ENCODE measurements at regions of chr11 and their contacts with region 1.

Region 1: GRCh38 chr11:122101625-122102291 is 14.3 kb downstream of the BLID start:
- DNase-seq: peak; percentile 85
- H3K4me3 Mint-ChIP-seq: no peak overlapping the region
- H3K27ac Mint-ChIP-seq: no peak overlapping the region
- H3K4me1 Mint-ChIP-seq: peaks cover 27% of the 10 kb centered on the region
- H3K27me3 Mint-ChIP-seq: no peaks in the 10 kb centered on the region
- CTCF ChIP-seq: peak; percentile 41

Region 2: DNA sequence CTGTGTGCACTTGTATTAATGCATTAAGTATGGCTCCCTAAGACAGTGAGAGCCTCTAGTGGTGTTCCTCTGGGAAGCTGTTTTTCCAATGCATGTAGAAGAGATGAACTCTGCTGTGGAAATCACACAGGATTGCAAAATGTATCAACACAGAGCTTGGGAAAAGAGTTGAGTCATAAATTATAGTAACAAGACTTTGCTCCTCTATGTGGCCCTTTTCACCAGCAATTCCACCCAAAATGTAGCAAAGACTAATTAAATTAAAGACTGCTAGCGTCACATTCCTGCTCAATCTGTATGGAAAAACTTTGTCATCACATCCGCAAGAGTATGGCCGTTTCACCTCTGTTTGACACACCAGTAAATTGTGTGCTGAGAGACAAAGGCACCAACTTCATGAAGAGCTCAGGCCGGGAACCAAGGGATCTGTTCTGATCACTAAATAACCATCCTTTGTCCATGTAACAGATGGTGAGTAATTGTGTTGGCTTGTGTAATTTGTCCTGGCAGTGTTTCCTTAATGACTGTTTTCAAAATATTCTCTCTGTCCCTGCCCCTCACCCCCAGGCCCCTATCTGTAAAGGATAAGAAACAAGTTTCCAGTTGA is 439.8 kb before region 1 on chr11:
- CTCF ChIA-PET with region 1: interaction called, 82 read pairs
- POLR2A ChIA-PET with region 1: interaction called, 12 read pairs
- intact Hi-C with region 1: no loop called
- DNase-seq: peak; percentile 63
- H3K4me3 Mint-ChIP-seq: no peak overlapping the region
- H3K27ac Mint-ChIP-seq: peak overlapping the region; percentile 86
- H3K4me1 Mint-ChIP-seq: peaks cover 12% of the 10 kb centered on the region
- H3K27me3 Mint-ChIP-seq: no peaks in the 10 kb centered on the region
- CTCF ChIP-seq: no peak

Region 3: GRCh38 chr11:122045181-122045586 is 56.6 kb before region 1 on chr11:
- CTCF ChIA-PET with region 1: no interaction called
- POLR2A ChIA-PET with region 1: no interaction called
- intact Hi-C with region 1: loop called (anchors 1 kb)
- DNase-seq: peak; percentile 63
- H3K4me3 Mint-ChIP-seq: no peak overlapping the region
- H3K27ac Mint-ChIP-seq: peak overlapping the region; percentile 59
- H3K4me1 Mint-ChIP-seq: peaks cover 7% of the 10 kb centered on the region
- H3K27me3 Mint-ChIP-seq: no peaks in the 10 kb centered on the region
- CTCF ChIP-seq: no peak

Region 4: DNA sequence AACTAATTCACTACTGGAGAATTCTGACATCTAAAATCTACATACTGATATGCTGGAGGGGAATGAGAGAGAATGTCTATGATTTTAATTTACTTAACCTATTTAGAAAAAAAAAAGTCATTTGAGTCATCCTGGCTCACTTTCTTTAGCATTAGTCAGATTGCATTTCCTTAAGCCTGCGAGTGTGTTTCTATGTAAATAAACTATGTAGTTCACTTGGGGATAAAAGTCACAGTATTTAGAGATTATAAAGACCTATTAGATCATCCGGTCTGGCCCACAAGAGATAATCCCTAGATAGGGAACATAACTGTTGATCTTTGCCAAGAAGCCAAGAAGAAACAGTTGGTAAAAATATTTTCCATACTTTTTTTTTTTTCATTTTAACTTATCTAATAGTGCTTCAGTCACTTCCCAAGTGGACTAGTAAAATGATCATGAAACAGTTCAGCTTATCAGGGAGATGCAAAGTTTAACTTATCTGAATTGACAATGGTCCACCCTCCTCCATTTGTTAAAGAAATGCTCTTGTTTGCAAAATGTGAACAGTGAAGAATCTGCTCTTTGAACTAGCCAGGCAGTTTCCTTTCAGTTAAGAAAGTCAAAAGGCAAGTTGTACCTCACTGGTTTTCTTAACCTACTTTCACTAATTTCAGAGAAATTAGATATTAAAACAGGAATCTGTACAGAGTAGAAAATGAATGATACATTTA is 35.5 kb after region 1 on chr11:
- CTCF ChIA-PET with region 1: interaction called, 8 read pairs
- POLR2A ChIA-PET with region 1: interaction called, 19 read pairs
- intact Hi-C with region 1: no loop called
- DNase-seq: peak; percentile 70
- H3K4me3 Mint-ChIP-seq: no peak overlapping the region
- H3K27ac Mint-ChIP-seq: peak overlapping the region; percentile 89
- H3K4me1 Mint-ChIP-seq: peaks cover 46% of the 10 kb centered on the region
- H3K27me3 Mint-ChIP-seq: no peaks in the 10 kb centered on the region
- CTCF ChIP-seq: no peak

Region 5: DNA sequence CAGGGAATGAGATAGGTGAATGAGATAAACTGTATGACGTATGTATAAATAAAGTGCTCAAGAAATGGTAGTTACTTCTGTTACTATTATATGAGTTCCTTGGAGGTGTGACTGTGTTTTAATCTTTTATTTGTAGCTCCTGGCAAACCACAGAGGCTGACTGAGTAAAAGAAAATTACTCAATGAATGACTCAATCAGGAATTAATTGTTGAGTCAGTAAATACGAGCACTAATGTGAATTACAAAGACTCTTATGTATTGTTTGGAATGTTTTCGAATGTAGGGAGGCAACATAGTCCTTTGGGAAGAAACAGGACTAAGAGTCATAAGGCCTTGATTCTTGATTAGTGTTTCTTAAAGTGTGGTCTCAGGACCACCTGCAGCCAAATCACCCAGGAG is 65.3 kb after region 1 on chr11:
- CTCF ChIA-PET with region 1: interaction called, 10 read pairs
- POLR2A ChIA-PET with region 1: interaction called, 290 read pairs
- intact Hi-C with region 1: no loop called
- DNase-seq: peak; percentile 84
- H3K4me3 Mint-ChIP-seq: peak overlapping the region; percentile 39
- H3K27ac Mint-ChIP-seq: peak overlapping the region; percentile 96
- H3K4me1 Mint-ChIP-seq: peaks cover 68% of the 10 kb centered on the region
- H3K27me3 Mint-ChIP-seq: no peaks in the 10 kb centered on the region
- CTCF ChIP-seq: no peak

Region 6: DNA sequence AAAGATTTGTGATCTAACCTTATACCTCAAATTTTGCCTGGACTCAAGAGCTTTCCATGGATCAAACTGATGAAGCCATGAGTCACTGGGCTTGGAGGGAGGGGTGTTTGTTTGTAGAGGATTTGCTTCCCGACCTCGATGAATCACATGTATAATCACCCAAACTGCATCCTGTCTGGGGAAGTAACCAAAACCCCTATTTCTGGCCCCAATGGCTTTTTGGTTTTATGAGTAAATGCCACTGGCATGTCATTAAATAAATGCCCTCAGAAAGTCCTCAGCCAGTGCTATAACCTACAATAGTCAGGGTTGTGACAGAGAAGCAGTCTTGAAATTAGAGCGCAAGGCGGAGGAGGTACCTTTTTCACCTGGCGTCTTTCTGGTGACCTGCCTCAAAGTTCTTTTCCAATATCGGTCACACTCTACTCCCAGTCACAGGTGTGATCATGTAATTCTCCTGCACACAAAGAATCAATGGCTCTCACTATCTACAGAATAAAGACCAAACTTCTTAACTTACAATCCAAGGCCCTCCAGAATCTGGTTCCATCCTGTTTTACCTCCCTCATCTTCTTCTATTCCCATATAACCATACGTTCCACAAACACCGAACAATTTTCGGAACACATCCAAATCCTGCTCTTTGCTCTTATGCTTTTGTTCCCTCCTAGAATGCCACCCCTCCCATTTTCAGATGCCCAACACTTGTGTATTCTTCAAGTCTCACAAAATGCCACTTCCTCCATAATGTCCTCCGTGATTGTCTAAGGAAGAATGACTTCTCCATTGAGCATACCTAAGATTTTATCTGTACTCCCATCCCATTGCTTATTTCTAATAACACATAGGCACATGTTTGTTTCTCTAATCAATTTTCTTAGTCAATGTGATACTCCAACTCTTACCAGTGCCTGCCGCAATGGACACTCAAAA is 95.6 kb after region 1 on chr11:
- CTCF ChIA-PET with region 1: interaction called, 54 read pairs
- POLR2A ChIA-PET with region 1: interaction called, 103 read pairs
- intact Hi-C with region 1: no loop called
- DNase-seq: peak; percentile 98
- H3K4me3 Mint-ChIP-seq: peak overlapping the region; percentile 12
- H3K27ac Mint-ChIP-seq: peak overlapping the region; percentile 49
- H3K4me1 Mint-ChIP-seq: peaks cover 46% of the 10 kb centered on the region
- H3K27me3 Mint-ChIP-seq: no peaks in the 10 kb centered on the region
- CTCF ChIP-seq: no peak